CD4-positive, alpha-beta T cell (primary cell): ENCODE measurements at regions of chr9 and their contacts with region 1.

Region 1: GRCh38 chr9:76313771-76314170 is 80.5 kb downstream of the RFK start:
- DNase-seq: no peak
- ATAC-seq: no peak
- H3K4me3 ChIP-seq: no peak overlapping the region
- H3K4me3 Mint-ChIP-seq: no peak overlapping the region
- H3K27ac ChIP-seq: no peak overlapping the region
- H3K27ac Mint-ChIP-seq: no peak overlapping the region
- H3K4me1 ChIP-seq: no peaks in the 10 kb centered on the region
- H3K4me1 Mint-ChIP-seq: no peaks in the 10 kb centered on the region
- H3K27me3 ChIP-seq: no peaks in the 10 kb centered on the region
- H3K27me3 Mint-ChIP-seq: peaks cover 17% of the 10 kb centered on the region
- CTCF ChIP-seq: no peak

Region 2: GRCh38 chr9:76292246-76292645 is 21.5 kb before region 1 on chr9:
- CTCF ChIA-PET with region 1: no interaction called
- POLR2A ChIA-PET with region 1: no interaction called
- intact Hi-C with region 1: loop called in 1 of 2 experiments (anchors 2 kb)
- DNase-seq: no peak
- ATAC-seq: no peak
- H3K4me3 ChIP-seq: no peak overlapping the region
- H3K4me3 Mint-ChIP-seq: no peak overlapping the region
- H3K27ac ChIP-seq: no peak overlapping the region
- H3K27ac Mint-ChIP-seq: no peak overlapping the region
- H3K4me1 ChIP-seq: no peaks in the 10 kb centered on the region
- H3K4me1 Mint-ChIP-seq: no peaks in the 10 kb centered on the region
- H3K27me3 ChIP-seq: no peaks in the 10 kb centered on the region
- H3K27me3 Mint-ChIP-seq: no peaks in the 10 kb centered on the region
- CTCF ChIP-seq: no peak